Ovary (tissue), 10 donors: ENCODE measurements at regions of chr12 and their contacts with region 1.

Region 1: DNA sequence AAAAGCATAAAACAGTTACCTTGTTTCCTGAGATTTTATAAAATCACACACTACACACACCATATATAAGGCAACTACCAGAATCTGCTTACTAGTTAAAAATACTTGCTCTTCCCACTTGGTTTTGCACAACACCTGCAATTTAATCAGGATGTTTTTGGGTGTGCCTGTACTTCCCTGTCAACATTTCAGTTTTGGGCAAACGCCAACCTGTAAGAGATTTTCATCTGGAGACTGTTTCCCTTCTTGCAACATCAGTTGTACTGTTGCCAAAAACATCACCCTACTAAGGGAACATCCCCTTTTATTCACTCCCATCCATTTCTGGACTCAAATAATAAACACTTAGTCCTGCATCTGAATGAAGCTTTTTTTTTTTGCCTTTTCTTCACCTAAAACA is 172.3 kb downstream of the DUSP6 start:
- DNase-seq: peak in 1 of 5 donors; percentile 44
- H3K4me3 ChIP-seq: no peak overlapping the region
- H3K27ac ChIP-seq: no peak overlapping the region
- H3K4me1 ChIP-seq: no peaks in the 10 kb centered on the region
- H3K27me3 ChIP-seq: no peaks in the 10 kb centered on the region
- CTCF ChIP-seq: no peak
- EP300 ChIP-seq: no peak
- POLR2A ChIP-seq: no peak

Region 2: DNA sequence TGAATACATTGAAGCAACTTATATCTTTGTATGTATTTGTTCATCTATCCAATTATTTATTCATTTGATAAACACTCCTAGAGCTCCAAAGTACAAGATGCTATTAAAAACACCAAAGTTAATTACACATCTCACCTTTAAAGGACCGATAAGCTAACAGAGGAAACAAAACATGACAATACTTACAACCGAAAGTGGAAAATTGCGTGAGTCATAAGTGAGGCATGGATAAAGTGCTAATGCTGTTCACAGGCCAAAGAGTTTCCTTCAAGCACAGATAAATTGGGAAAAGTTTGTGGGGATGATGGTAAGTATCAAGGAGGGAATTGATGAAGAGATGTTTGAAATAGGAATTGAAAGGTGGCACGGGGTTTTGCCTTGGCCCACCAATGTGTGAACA is 426.9 kb before region 1 on chr12:
- intact Hi-C with region 1: loop called in 1 of 4 experiments (anchors 10 kb)
- DNase-seq: no peak
- H3K4me3 ChIP-seq: no peak overlapping the region
- H3K27ac ChIP-seq: no peak overlapping the region
- H3K4me1 ChIP-seq: no peaks in the 10 kb centered on the region
- H3K27me3 ChIP-seq: no peaks in the 10 kb centered on the region
- CTCF ChIP-seq: no peak
- EP300 ChIP-seq: no peak
- POLR2A ChIP-seq: no peak

Region 3: DNA sequence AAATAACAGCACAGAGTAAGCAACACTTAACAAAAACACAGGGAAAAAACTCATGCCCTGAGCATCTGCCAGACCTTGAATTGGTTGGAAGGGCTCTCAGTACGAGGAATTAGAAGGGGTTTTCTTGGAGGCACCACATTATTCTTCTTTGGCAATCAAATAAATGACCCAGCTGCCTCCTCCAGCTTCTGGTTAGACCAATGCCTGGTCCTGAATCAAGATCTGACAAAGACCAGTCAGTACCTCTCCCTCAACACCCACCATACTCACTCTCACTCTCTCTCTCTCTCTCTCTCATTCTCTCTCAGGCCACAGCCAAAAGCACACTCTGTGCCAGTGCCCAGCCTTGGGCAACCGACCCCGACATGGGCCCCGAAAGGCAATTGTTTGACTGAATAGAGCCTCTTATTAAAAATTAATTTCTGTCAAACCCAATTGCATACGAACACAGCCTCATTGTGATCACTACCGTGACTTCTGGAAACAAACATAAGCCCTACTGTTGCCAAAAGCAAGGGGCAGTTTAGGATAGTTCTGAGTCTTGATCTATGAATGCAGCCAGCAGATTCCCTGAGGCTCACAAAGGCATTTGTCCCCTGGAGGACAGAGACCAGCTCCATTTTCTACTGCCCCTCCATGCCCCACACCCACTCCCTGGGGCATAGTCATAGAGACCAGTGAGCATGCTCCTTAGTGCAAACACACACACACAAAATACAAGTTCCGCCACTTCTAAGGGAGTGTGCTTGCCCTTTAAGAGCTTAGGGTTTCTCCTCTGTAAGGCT is 148.5 kb after region 1 on chr12:
- intact Hi-C with region 1: loop called in 1 of 4 experiments (anchors 5 kb)
- DNase-seq: no peak
- H3K4me3 ChIP-seq: no peak overlapping the region
- H3K27ac ChIP-seq: no peak overlapping the region
- H3K4me1 ChIP-seq: peaks cover 9% of the 10 kb centered on the region
- H3K27me3 ChIP-seq: no peaks in the 10 kb centered on the region
- CTCF ChIP-seq: no peak
- EP300 ChIP-seq: no peak
- POLR2A ChIP-seq: no peak